ENCODE measurements at regions of chr15 and their contacts with region 1.

Region 1: DNA sequence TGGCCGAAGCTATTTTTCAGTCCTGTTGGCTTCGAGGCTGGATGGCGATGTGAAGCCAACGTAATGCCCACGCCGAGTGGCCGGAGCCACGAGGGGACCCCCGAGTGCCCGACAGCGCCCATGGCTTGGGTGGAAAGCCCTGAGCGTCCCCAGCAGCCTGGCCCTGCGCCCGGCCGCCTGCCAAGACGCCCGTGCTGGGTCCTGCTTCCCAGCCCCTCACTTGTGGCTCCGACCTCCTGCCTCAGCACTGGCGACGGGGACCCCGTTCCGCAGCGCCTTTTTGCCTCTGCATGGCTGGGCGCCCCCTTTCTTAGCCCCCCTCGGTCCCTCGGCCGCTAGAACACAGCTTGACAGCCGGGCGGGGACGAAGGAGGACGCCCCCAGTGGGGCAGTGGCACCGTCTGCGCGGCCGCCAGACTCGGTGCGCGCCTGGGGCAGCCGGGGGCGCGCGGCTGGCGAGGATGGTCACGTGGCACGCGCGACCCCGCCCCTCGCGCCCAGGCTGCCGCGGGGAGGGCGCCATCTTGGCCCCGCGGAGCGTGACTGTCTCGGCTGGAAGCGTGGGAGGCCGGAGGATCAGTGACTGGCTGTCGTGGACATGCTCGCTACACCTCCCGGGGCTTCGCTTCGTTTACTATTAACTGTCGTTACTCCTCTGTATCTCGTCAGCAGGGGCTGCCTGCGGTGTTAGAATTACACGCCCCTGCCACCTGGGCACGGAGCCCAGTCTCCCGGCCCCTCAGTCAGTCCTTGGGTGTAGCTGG is 626 bp upstream of the GPR176 start:
- DNase-seq: peak; percentile 74

Region 2: GRCh38 chr15:39934397-39935071 is 13.8 kb after region 1 on chr15:
- CTCF ChIA-PET with region 1: interaction called, 4 read pairs
- POLR2A ChIA-PET with region 1: interaction called, 54 read pairs
- DNase-seq: no peak

Region 3: DNA sequence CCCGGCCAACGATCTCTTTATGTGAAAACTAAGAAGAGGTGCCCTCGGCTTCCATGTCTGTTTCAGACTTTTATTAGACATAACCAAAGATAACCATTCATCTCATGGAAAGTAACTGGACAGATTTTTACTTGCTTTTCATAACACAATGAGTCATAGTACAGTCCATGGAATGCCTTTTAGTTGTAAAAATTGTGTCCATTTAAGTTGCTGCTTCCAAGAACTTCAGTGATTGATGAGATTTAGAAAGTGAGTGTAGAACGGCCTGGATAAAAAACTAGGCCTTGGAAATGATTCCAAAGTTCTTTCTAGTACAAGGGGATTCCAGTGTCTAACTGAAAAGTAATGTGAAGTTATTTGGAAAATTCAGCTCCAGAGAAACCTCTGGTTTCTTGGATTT is 24.0 kb after region 1 on chr15:
- CTCF ChIA-PET with region 1: no interaction called
- POLR2A ChIA-PET with region 1: no interaction called
- DNase-seq: no peak

Region 4: DNA sequence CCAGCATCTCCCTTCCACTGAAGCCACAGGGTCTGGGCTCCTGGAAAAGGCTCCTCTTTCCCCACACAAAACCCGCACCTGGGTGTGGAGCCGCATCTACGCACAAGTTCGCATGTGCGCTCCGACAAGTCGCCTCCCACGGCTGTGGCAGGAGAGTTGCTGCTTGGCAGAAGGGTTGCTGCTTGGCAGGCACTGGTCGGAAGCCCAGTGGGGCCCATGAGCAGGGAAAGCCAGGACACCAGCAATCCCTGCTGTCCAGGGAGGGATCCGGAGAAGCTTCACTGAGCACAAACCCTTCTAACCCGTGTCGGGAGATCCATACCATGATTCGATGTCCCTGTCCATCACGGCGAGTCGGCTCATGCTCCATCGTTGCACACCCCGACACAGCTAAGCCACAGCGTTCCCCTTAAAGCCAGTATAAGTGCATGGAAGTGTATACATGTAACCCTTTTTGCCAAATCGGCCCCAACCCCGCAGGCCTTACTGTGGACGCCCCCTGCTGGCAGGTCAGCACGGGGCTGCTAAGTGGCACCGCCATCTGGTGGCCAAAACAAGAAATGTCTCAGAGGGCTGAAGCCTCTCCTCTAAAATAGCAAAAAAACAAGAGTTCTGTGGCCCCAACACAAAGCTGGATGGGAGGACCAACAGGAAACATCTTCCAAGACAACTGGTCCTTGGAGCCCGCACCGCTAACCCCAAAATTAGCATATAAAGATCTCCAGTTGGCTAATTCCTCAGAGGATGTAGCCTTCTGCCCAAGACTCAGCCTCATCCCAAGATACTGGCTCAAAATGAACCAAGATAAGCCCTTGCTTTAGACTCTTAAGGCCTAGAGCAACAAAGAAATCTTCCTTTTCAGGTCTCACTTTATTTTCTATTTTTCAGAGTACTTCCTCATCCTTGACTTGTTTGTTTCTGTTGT is 353.9 kb after region 1 on chr15:
- CTCF ChIA-PET with region 1: no interaction called
- POLR2A ChIA-PET with region 1: no interaction called
- DNase-seq: peak; percentile 61

Measured in HEK293T (cell line).